ENCODE measurements at regions of chr16 and their contacts with region 1.

Region 1: GRCh38 chr16:66954097-66954659 is 6.9 kb upstream of the CES3 start:
- DNase-seq: no peak
- H3K4me3 ChIP-seq: no peak overlapping the region
- H3K27me3 ChIP-seq: peaks cover 5% of the 10 kb centered on the region
- CTCF ChIP-seq: peak; percentile 81

Region 2: GRCh38 chr16:66705790-66706505 is 248.2 kb before region 1 on chr16:
- CTCF ChIA-PET with region 1: no interaction called
- POLR2A ChIA-PET with region 1: no interaction called
- DNase-seq: no peak
- H3K4me3 ChIP-seq: no peak overlapping the region
- H3K27me3 ChIP-seq: no peaks in the 10 kb centered on the region
- CTCF ChIP-seq: no peak

Region 3: GRCh38 chr16:66924527-66925321 is 29.5 kb before region 1 on chr16:
- CTCF ChIA-PET with region 1: interaction called, 10 read pairs
- POLR2A ChIA-PET with region 1: no interaction called
- DNase-seq: no peak
- H3K4me3 ChIP-seq: peak overlapping the region; percentile 45
- H3K27me3 ChIP-seq: peaks cover 9% of the 10 kb centered on the region
- CTCF ChIP-seq: no peak

Measured in BJ (cell line).